Heart right ventricle (tissue), 16 donors: ENCODE measurements at regions of chr9 and their contacts with region 1.

Region 1: DNA sequence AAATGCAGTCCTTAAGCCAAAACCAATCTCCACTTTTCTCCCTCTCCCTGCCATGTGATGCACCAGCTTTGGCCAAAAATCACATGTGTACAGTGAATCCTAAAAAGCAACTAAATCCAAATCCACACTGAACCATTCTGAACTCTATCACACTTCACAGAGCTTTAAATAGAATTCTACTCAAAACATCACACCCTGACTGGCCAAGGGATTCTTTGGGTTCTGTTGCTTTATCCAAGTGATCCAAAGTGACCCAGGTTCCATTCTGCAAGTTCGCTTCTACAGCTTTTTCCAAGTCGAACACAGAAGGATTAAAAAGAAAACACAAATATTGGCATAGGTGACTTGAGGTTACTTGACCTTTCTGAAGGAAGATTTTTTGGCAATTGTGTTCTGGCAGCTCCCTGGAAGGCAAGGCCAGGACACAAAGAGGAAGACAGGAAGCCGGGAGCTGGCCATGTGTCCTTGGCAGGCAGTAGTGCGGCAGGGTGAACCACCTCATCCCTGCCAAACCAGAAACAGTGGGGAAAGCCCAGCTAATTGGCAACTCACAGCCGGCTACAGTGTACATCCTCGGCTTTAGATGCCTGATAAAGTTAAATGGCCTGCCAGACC is 115.0 kb downstream of the NFIB start:
- DNase-seq: peak; percentile 63 to 75
- ATAC-seq: peak; percentile 72 to 91 (median 87)
- H3K4me3 ChIP-seq: peak overlapping the region in 4 of 10 donors; percentile 4 to 8 (median 7)
- H3K27ac ChIP-seq: peak overlapping the region; percentile 10 to 85 (median 71)
- H3K4me1 ChIP-seq: peaks cover 8 to 100% (median 82%) of the 10 kb centered on the region in 9 donors
- H3K27me3 ChIP-seq: no peaks in the 10 kb centered on the region
- CTCF ChIP-seq: no peak

Region 2: DNA sequence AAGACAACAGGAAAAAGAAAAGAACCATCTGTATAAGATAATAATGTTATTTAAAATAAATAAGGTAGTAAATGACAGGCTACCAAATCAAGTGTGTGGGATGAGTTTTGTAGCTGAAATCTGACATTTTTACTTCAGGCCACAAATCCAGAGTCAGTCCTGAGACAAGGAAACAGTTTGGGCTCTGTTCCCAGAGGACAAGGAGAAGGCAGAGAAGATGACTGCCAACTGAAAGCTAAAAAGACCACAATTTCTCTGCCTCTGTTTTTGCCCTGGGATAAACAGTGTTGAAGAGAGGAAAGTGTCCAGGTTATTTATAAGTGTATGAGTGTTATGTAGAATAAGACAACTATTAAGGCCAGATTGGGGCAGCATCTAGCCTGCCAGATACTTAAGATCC is 65.6 kb before region 1 on chr9:
- intact Hi-C with region 1: loop called in 1 of 10 experiments (anchors 10 kb)
- DNase-seq: no peak
- ATAC-seq: peak in 4 of 8 donors; percentile 27 to 49 (median 38)
- H3K4me3 ChIP-seq: no peak overlapping the region
- H3K27ac ChIP-seq: peak overlapping the region in 6 of 10 donors; percentile 3 to 30 (median 5)
- H3K4me1 ChIP-seq: peaks cover 0 to 29% (median 13%) of the 10 kb centered on the region in 9 donors
- H3K27me3 ChIP-seq: no peaks in the 10 kb centered on the region
- CTCF ChIP-seq: no peak

Region 3: GRCh38 chr9:14238552-14238951 is 39.6 kb after region 1 on chr9:
- intact Hi-C with region 1: loop called in 1 of 10 experiments (anchors 5 kb)
- DNase-seq: peak in 1 of 2 donors; percentile 44
- ATAC-seq: peak; percentile 70 to 89 (median 82)
- H3K4me3 ChIP-seq: no peak overlapping the region
- H3K27ac ChIP-seq: peak overlapping the region in 9 of 10 donors; percentile 57 to 87 (median 74)
- H3K4me1 ChIP-seq: peaks cover 0 to 97% (median 79%) of the 10 kb centered on the region in 9 donors
- H3K27me3 ChIP-seq: no peaks in the 10 kb centered on the region
- CTCF ChIP-seq: no peak